Esophagus muscularis mucosa (tissue), 4 donors: ENCODE measurements at regions of chr9 and their contacts with region 1.

Region 1: GRCh38 chr9:121902461-121903135 is 190.5 kb downstream of the TTLL11 start:
- DNase-seq: no peak
- H3K4me3 ChIP-seq: no peak overlapping the region
- H3K27ac ChIP-seq: no peak overlapping the region
- H3K4me1 ChIP-seq: peaks cover 0 to 6% (median 4%) of the 10 kb centered on the region in 4 donors
- H3K27me3 ChIP-seq: no peaks in the 10 kb centered on the region
- CTCF ChIP-seq: no peak
- EP300 ChIP-seq: no peak
- POLR2A ChIP-seq: no peak

Region 2: DNA sequence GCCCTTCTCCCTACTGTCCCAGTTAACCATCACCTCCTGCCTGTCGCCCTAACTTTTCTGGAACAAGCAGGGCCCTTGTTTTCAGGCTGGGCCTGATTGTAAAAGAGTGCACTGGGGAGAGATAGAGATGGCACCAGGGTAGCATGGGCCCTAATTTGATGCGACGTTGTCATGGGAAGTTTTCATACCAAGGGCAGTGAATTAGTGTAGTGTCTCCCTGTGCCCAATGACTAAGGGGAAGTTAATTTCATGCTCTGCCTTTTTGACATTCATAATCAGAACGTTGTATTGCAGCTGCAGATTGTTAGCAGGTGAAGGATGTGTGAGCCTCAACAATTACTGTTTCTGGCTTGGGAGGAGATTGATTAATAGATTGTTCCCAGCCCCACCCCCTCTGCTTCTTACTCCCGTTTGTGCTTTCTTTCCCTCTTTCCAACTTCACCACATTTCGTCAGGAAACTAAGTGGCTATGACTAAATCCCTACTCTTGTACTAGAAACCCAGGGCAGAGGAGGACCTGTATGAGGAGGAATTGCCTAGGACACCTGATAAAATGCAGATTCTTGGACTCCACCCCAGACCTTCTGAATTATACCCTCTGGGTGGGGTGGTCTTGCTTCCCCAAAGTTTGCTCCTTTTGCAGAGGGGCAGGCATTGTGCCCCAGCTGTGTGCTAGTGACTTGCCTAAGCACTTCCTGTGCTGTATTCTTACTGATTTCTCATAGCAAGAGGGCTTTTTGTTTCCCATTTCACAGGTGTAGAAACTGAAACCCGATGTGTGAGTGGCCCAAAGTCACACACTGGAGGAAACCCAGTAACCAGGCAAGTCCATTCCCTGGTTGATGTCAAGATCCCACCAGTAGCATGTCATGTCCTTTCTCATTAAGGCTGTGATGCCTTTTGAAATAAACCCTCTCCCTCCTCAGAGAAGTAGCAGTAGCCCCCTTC is 194.8 kb before region 1 on chr9:
- intact Hi-C with region 1: no loop called
- DNase-seq: no peak
- H3K4me3 ChIP-seq: no peak overlapping the region
- H3K27ac ChIP-seq: no peak overlapping the region
- H3K4me1 ChIP-seq: peaks cover 23 to 79% (median 46%) of the 10 kb centered on the region in 4 donors
- H3K27me3 ChIP-seq: no peaks in the 10 kb centered on the region
- CTCF ChIP-seq: no peak
- EP300 ChIP-seq: no peak
- POLR2A ChIP-seq: no peak

Region 3: GRCh38 chr9:121735065-121735789 is 167.4 kb before region 1 on chr9:
- intact Hi-C with region 1: no loop called
- DNase-seq: no peak
- H3K4me3 ChIP-seq: peak overlapping the region; percentile 53 to 63 (median 56)
- H3K27ac ChIP-seq: peak overlapping the region; percentile 92 to 94 (median 94)
- H3K4me1 ChIP-seq: peaks cover 83 to 91% (median 88%) of the 10 kb centered on the region in 4 donors
- H3K27me3 ChIP-seq: no peaks in the 10 kb centered on the region
- CTCF ChIP-seq: peak; percentile 15 to 39 (median 35)
- EP300 ChIP-seq: no peak
- POLR2A ChIP-seq: no peak

Region 4: GRCh38 chr9:121770415-121771273 is 132.0 kb before region 1 on chr9:
- intact Hi-C with region 1: loop called (anchors 10 kb)
- DNase-seq: no peak
- H3K4me3 ChIP-seq: no peak overlapping the region
- H3K27ac ChIP-seq: peak overlapping the region in 1 of 4 donors; percentile 55
- H3K4me1 ChIP-seq: peaks cover 18 to 30% (median 25%) of the 10 kb centered on the region in 4 donors
- H3K27me3 ChIP-seq: no peaks in the 10 kb centered on the region
- CTCF ChIP-seq: no peak
- EP300 ChIP-seq: no peak
- POLR2A ChIP-seq: no peak

Region 5: GRCh38 chr9:121839726-121840500 is 62.7 kb before region 1 on chr9:
- intact Hi-C with region 1: loop called (anchors 10 kb)
- DNase-seq: no peak
- H3K4me3 ChIP-seq: no peak overlapping the region
- H3K27ac ChIP-seq: no peak overlapping the region
- H3K4me1 ChIP-seq: peaks cover 0 to 14% (median 11%) of the 10 kb centered on the region in 4 donors
- H3K27me3 ChIP-seq: no peaks in the 10 kb centered on the region
- CTCF ChIP-seq: no peak
- EP300 ChIP-seq: no peak
- POLR2A ChIP-seq: no peak

Region 6: GRCh38 chr9:122453677-122454135 is 551.1 kb after region 1 on chr9:
- intact Hi-C with region 1: no loop called
- DNase-seq: no peak
- H3K4me3 ChIP-seq: no peak overlapping the region
- H3K27ac ChIP-seq: no peak overlapping the region
- H3K4me1 ChIP-seq: no peaks in the 10 kb centered on the region
- H3K27me3 ChIP-seq: no peaks in the 10 kb centered on the region
- CTCF ChIP-seq: no peak
- EP300 ChIP-seq: no peak
- POLR2A ChIP-seq: no peak

Region 7: DNA sequence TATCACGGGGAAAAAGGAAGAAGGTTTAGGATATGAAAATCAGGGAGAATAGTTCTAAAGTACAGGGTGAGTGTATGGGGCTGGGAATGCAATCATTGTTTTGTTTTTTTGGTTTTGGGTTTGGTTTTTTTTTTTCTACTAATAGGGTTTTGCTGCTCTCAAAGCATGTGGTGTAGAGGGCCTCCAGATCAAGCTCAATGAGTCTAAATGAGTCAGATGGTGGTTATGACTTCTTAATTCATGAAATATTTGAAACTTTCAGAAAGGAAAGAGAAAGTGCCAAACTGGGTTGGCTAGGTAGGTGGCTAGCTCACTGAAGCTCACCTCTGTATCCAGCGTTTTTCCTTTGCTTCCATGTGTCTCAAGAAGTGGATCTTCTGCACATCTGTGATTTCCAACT is 669.9 kb after region 1 on chr9:
- intact Hi-C with region 1: no loop called
- DNase-seq: no peak
- H3K4me3 ChIP-seq: no peak overlapping the region
- H3K27ac ChIP-seq: no peak overlapping the region
- H3K4me1 ChIP-seq: no peaks in the 10 kb centered on the region
- H3K27me3 ChIP-seq: no peaks in the 10 kb centered on the region
- CTCF ChIP-seq: no peak
- EP300 ChIP-seq: no peak
- POLR2A ChIP-seq: no peak